ENCODE measurements at regions of chr3 and their contacts with region 1.

Region 1: DNA sequence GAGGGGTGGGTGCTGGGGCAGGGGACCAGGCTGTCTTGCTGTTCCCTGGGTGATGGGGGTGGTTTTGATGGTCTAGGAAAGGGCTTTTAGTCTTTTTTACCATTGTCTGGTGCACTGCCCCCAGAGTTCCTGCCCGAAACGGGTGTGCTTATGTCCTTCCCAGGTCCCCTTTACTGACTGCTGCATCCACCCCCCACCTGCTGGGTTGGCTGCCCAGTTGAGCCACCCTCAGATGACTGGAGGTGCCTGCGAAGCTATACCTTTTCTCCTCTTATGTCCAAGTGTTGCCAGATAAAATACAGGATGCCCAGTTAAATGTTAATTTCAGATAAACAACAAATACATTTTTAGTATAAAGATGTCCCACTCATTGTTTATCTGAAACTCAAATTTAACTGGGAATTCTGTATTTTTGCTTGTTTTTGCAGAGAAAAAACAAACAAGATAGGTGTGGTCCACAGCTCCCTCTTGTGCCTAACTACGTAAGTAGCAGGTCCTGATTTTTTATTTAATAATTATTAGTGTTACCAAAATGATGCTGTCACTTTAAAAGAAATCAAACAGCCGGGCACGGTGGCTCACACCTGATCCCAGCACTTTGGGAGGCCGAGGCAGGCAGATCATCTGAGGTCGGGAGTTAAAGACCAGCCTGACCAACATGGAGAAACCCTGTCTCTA is 6.1 kb upstream of the RPP14 start:
- DNase-seq: no peak
- H3K4me3 Mint-ChIP-seq: no peak overlapping the region
- H3K27ac Mint-ChIP-seq: no peak overlapping the region
- H3K4me1 Mint-ChIP-seq: peaks cover under 1% of the 10 kb centered on the region
- H3K27me3 Mint-ChIP-seq: peaks cover 51% of the 10 kb centered on the region

Region 2: DNA sequence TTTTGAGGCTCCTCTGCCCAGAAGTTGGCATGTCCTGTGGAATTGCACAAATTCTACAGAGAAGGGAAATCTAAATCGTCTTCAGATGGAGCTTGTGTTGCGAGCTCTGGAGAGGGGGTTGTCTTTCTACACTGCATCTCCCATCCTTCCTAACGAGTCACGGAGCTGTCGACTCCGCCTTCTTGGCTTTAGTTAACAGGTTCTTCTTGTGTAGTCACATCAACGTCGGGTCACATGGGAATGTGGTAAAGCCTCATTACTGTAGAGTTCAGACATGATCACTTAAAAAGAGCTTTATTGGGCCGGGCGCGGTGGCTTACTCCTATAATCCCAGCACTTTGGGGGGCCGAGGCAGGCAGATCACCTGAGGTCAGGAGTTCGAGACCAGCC is 149.2 kb before region 1 on chr3:
- CTCF ChIA-PET with region 1: no interaction called
- DNase-seq: no peak
- H3K4me3 Mint-ChIP-seq: no peak overlapping the region
- H3K27ac Mint-ChIP-seq: no peak overlapping the region
- H3K4me1 Mint-ChIP-seq: no peaks in the 10 kb centered on the region
- H3K27me3 Mint-ChIP-seq: no peaks in the 10 kb centered on the region

Region 3: DNA sequence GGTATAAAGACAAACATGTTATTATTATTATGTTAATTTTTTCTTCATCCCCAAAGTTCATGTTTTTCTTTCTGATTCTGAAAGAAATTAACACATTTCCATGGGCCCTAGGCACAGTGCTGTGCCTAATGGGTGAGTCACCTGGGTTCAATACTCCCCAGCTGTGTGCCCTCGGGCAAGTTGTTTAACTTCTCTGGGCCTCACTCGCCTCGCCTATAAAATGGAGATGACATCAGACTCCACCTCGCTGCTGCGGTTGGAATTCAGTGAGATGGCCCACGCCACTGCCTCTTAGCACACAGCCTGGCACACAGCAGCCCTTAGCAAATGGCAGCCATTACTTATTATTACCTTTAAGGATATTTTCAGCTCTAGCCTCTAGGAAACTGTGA is 111.8 kb before region 1 on chr3:
- CTCF ChIA-PET with region 1: interaction called, 43 read pairs
- DNase-seq: no peak
- H3K4me3 Mint-ChIP-seq: no peak overlapping the region
- H3K27ac Mint-ChIP-seq: no peak overlapping the region
- H3K4me1 Mint-ChIP-seq: peaks cover 4% of the 10 kb centered on the region
- H3K27me3 Mint-ChIP-seq: peaks cover 9% of the 10 kb centered on the region

Region 4: DNA sequence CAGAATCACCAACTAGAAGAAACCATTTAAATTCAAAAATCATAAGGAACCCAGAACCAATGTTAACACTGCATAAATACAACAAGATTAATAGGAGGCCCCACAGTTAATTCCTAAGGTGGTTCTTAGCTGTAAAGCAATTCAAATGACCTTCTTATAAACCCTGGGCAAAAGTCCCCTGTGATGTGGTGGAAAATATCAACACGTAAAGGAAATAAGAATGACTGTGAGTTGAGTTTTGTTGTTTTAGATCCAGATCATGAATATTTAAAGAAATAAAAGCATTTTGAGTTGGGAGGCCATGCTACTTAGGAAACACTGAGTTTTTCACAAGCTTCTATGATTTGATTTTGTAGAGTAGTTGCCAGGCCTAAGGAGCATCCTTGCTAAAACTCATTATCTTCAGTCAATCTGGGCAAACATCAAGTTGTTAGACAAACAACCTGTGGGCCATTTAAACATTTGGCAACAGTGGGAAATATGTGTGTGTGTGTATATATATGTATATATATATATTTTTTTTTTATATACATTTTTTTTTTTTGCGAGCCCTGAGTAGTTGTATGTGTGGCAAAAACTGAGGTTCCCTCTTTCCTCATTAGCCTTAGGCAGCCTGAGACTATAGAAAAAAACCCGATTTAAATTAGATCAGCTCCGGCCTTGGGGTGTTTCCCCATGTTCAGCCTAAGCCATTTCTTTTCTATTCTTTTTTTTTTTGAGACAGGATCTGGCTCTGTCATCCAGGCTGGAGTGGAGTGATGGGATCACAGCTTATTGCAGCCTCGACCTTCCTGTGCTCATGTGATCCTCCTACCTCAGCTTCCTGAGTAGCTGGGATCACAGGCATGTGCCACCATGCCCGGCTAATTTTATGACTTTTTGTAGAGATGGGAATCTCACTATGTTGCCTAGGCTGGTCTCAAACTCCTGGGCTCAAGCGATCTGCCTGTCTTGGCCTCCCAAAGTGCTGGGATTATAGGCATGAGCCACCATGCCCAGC is 24.7 kb after region 1 on chr3:
- CTCF ChIA-PET with region 1: no interaction called
- DNase-seq: no peak
- H3K4me3 Mint-ChIP-seq: no peak overlapping the region
- H3K27ac Mint-ChIP-seq: peak overlapping the region; percentile 62
- H3K4me1 Mint-ChIP-seq: peaks cover 28% of the 10 kb centered on the region
- H3K27me3 Mint-ChIP-seq: no peaks in the 10 kb centered on the region